Colonic mucosa (tissue), 4 donors: ENCODE measurements at regions of chr7 and their contacts with region 1.

Region 1: DNA sequence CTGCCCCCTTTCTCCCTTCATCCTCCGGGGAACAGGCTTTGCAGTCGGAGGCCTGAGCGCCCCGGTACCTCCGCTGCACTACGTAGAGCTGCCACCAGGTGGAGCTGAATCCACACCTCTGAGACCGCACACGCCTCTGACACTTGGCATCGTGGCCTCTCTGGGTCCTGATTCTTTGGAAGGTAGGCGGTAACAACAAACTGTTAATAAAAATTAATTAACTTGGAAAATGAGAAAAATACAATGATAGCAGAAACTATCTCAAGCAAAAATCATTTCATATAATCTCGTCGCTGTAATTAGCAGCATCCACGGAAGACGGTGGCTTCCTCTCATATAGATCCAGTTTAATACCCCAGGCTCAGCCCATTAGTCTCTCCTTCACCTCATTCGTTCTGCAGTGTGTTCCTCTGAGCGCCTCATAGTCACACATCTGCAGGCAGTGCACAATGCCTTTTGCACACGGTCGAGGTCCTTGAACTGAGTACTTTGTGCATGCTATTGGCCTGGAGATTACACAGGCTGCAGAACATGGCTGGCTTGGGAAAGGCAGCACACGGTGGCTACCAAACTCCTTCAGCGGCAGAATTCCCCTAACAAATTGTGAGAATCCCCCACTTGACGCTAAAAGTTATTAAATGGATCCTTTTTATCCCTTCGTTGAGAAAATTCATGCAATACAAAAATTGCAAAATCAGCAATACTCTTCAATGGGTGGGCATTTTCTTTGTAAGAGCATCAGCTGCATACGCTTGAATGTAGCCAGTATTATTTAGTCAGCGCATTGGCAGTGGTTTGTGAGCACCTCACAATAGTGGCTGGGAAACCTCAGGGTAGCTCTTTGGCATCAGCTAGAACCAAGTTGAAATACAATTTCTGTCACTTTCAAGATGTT is 18.7 kb downstream of the OR9A2 start:
- DNase-seq: peak; percentile 80
- H3K4me3 ChIP-seq: no peak overlapping the region
- H3K27ac ChIP-seq: no peak overlapping the region
- H3K4me1 ChIP-seq: no peaks in the 10 kb centered on the region
- H3K27me3 ChIP-seq: no peaks in the 10 kb centered on the region
- CTCF ChIP-seq: peak; percentile 92

Region 2: DNA sequence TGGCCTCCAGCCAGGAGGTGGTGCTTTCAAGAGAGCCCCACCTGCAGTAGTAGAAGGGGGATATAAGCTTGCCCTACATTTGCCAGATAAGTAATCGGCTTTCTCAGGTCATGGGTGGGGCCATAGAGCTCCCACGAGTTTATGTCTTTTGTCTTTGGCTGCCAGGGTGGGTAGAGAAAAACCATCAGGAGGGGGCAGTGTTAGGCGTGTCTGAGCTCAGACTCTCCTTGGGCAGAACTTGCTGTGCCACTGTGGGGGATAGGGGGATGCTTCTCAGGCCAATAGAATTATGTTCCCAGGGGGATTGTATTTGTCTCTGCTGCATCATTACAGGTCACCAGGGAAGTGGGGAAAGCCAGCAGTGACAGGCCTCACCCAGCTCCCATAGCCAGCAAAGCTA is 1981.2 kb before region 1 on chr7:
- intact Hi-C with region 1: no loop called
- DNase-seq: no peak
- H3K4me3 ChIP-seq: no peak overlapping the region
- H3K27ac ChIP-seq: no peak overlapping the region
- H3K4me1 ChIP-seq: no peaks in the 10 kb centered on the region
- H3K27me3 ChIP-seq: no peaks in the 10 kb centered on the region
- CTCF ChIP-seq: no peak

Region 3: DNA sequence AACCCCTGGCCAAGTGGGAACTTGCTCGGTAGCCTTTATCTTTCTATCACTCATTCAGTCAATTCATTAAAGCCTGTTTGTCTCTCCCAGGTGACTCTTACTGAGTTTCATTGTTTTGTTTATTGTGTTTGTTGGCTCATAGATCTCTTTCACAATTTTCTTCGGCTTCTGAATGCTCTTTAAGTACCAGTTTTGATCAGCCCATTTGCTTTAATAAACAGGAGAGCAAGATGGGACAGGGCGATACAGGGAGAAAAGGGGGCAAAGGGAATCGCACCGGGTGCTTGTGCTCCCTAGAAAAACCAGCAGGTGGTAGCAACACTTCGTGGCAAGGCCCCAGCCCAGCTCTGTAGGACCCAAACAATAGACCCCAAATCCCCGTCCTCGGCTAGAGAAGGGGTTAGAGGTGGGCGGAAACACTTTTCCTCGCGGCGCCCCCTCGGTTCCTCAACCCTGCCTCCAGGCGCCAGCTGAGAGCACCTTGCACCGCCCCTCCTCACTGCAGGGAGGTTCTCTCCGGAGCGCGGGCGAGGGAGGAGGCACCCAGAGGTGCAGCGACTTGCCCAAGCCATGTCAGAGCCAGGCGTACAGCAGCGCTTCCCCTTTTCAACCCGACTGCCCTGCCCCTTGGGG is 154.4 kb before region 1 on chr7:
- intact Hi-C with region 1: loop called (anchors 5 kb)
- DNase-seq: peak; percentile 61
- H3K4me3 ChIP-seq: peak overlapping the region; percentile 46
- H3K27ac ChIP-seq: peak overlapping the region; percentile 57
- H3K4me1 ChIP-seq: peaks cover 6% of the 10 kb centered on the region
- H3K27me3 ChIP-seq: no peaks in the 10 kb centered on the region
- CTCF ChIP-seq: peak; percentile 73

Region 4: DNA sequence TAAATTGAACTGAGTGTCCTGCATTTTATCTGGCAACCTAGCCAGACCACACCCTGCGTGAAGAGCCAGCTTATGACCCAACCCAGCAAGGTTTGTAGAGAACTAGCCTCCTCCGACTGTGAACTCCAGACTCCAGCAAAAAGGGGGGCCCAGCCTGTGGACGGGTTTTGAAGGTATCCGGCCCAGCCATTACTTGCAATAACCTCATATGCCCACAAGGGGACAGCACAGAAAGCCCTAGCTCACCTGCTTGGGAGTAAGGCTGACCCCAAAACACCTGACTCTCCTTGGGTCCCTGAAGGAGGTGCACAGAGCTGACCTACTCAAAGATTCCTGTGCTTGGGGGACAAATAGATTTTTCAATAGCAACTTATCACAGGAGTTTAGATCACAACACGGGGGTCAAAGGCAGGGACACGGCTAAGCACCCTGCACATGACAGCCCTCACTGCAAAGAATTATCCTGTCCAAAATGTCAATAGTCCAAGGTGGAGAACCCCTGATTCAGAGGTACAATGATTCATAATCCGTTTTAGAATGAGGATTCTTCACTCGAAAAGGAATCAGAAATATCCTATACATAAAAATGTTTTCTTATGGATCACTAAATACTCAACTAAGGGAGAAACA is 127.3 kb before region 1 on chr7:
- intact Hi-C with region 1: loop called (anchors 5 kb)
- DNase-seq: no peak
- H3K4me3 ChIP-seq: no peak overlapping the region
- H3K27ac ChIP-seq: no peak overlapping the region
- H3K4me1 ChIP-seq: no peaks in the 10 kb centered on the region
- H3K27me3 ChIP-seq: no peaks in the 10 kb centered on the region
- CTCF ChIP-seq: peak; percentile 79

Region 5: GRCh38 chr7:142960955-142961512 is 47.2 kb before region 1 on chr7:
- intact Hi-C with region 1: no loop called
- DNase-seq: no peak
- H3K4me3 ChIP-seq: no peak overlapping the region
- H3K27ac ChIP-seq: no peak overlapping the region
- H3K4me1 ChIP-seq: no peaks in the 10 kb centered on the region
- H3K27me3 ChIP-seq: no peaks in the 10 kb centered on the region
- CTCF ChIP-seq: no peak

Region 6: GRCh38 chr7:143214789-143215679 is 206.8 kb after region 1 on chr7:
- intact Hi-C with region 1: loop called (anchors 1 kb)
- DNase-seq: peak; percentile 69
- H3K4me3 ChIP-seq: no peak overlapping the region
- H3K27ac ChIP-seq: no peak overlapping the region
- H3K4me1 ChIP-seq: no peaks in the 10 kb centered on the region
- H3K27me3 ChIP-seq: no peaks in the 10 kb centered on the region
- CTCF ChIP-seq: peak; percentile 98